ENCODE measurements at regions of chr5 and their contacts with region 1.

Region 1: GRCh38 chr5:161544350-161544765 is 2.2 kb downstream of the GABRB2 start:
- DNase-seq: no peak
- ATAC-seq: peak; percentile 66
- H3K4me3 ChIP-seq: no peak overlapping the region
- H3K27ac ChIP-seq: no peak overlapping the region
- H3K4me1 ChIP-seq: no peaks in the 10 kb centered on the region
- H3K27me3 ChIP-seq: peaks cover 3 to 8% of the 10 kb centered on the region in 2 experiments; a peak in 2 of 4 replicates
- CTCF ChIP-seq: peak; percentile 75 to 94 (median 90)
- EP300 ChIP-seq: no peak
- POLR2A ChIP-seq: no peak
- RAD21 ChIP-seq: peak; percentile 64

Region 2: DNA sequence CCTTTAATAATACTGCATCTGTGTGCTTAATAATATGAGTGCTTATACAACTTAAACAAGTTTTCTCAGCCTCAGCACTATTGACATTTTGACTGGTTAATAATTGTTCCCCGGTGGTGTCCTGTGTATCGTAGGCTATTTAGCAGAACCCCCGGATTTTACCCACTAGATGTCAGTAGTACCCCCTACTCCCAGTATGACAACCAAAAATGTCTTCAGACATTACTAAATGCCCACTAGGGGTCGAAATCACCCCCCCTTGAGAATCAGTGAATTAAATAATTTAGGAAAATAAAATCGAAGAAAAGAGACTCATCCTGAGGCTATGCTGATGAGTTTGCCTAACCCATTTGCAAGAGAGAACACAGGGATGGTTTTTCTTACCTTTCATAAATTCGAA is 858.7 kb before region 1 on chr5:
- CTCF ChIA-PET with region 1: no interaction called
- POLR2A ChIA-PET with region 1: no interaction called
- RAD21 ChIA-PET with region 1: no interaction called
- SMC1A ChIA-PET with region 1: no interaction called
- in situ Hi-C with region 1: no loop called
- intact Hi-C with region 1: loop called (anchors 5 kb)
- DNase-seq: peak; percentile 13
- ATAC-seq: peak; percentile 89
- H3K4me3 ChIP-seq: no peak overlapping the region
- H3K27ac ChIP-seq: no peak overlapping the region
- H3K4me1 ChIP-seq: no peaks in the 10 kb centered on the region
- H3K27me3 ChIP-seq: no peaks in the 10 kb centered on the region; a peak in 1 of 4 replicates
- CTCF ChIP-seq: peak; percentile 47 to 70 (median 50)
- EP300 ChIP-seq: no peak
- POLR2A ChIP-seq: no peak
- RAD21 ChIP-seq: peak; percentile 64

Region 3: DNA sequence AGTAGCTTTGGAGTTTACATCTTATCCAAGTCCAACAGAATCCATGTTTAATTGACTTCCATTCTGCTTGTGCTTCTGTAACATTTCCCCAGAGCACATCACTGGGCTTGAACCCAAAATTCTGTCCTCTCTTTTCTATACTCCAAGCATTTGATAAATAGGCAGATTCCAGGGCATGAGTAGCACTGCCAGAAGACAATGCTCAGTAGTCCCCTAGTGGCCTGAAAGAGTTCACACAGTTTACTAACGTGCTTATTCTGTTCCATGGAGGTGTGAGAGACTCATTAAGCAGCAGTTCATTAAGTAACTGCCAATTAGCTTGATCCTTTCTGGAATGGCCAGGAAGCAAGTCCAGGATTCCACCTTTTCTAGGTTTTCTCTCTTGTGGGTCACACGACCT is 131.7 kb after region 1 on chr5:
- CTCF ChIA-PET with region 1: interaction called, 4 read pairs
- POLR2A ChIA-PET with region 1: no interaction called
- RAD21 ChIA-PET with region 1: no interaction called
- SMC1A ChIA-PET with region 1: interaction called, 3 read pairs
- in situ Hi-C with region 1: no loop called
- intact Hi-C with region 1: loop called (anchors 1 kb)
- DNase-seq: peak; percentile 1
- ATAC-seq: peak; percentile 91
- H3K4me3 ChIP-seq: no peak overlapping the region
- H3K27ac ChIP-seq: no peak overlapping the region
- H3K4me1 ChIP-seq: no peaks in the 10 kb centered on the region
- H3K27me3 ChIP-seq: no peaks in the 10 kb centered on the region
- CTCF ChIP-seq: peak; percentile 61 to 69 (median 66); a peak in 5 of 6 replicates
- EP300 ChIP-seq: no peak
- POLR2A ChIP-seq: no peak
- RAD21 ChIP-seq: peak; percentile 73

Region 4: GRCh38 chr5:161925960-161926359 is 381.6 kb after region 1 on chr5:
- CTCF ChIA-PET with region 1: no interaction called
- POLR2A ChIA-PET with region 1: no interaction called
- RAD21 ChIA-PET with region 1: interaction called, 3 read pairs
- SMC1A ChIA-PET with region 1: no interaction called
- in situ Hi-C with region 1: no loop called
- intact Hi-C with region 1: loop called (anchors 10 kb)
- DNase-seq: no peak
- ATAC-seq: peak; percentile 63
- H3K4me3 ChIP-seq: no peak overlapping the region
- H3K27ac ChIP-seq: no peak overlapping the region
- H3K4me1 ChIP-seq: no peaks in the 10 kb centered on the region
- H3K27me3 ChIP-seq: no peaks in the 10 kb centered on the region
- CTCF ChIP-seq: peak; percentile 10 to 26 (median 14); a peak in 3 of 6 replicates
- EP300 ChIP-seq: no peak
- POLR2A ChIP-seq: no peak
- RAD21 ChIP-seq: peak; percentile 25; the same call in 1 of the 2 replicates

Measured in GM12878 (cell line).